GM12878 (cell line): ENCODE measurements at regions of chr22 and their contacts with region 1.

Region 1: GRCh38 chr22:25081409-25081824 is 118.2 kb upstream of the CRYBB3 start:
- DNase-seq: no peak
- ATAC-seq: peak; percentile 51
- H3K4me3 ChIP-seq: no peak overlapping the region
- H3K27ac ChIP-seq: no peak overlapping the region
- H3K4me1 ChIP-seq: peaks cover 34% of the 10 kb centered on the region
- H3K27me3 ChIP-seq: no peaks in the 10 kb centered on the region
- CTCF ChIP-seq: peak; percentile 60 to 77 (median 69)
- EP300 ChIP-seq: no peak
- POLR2A ChIP-seq: no peak
- RAD21 ChIP-seq: peak; percentile 44

Region 2: DNA sequence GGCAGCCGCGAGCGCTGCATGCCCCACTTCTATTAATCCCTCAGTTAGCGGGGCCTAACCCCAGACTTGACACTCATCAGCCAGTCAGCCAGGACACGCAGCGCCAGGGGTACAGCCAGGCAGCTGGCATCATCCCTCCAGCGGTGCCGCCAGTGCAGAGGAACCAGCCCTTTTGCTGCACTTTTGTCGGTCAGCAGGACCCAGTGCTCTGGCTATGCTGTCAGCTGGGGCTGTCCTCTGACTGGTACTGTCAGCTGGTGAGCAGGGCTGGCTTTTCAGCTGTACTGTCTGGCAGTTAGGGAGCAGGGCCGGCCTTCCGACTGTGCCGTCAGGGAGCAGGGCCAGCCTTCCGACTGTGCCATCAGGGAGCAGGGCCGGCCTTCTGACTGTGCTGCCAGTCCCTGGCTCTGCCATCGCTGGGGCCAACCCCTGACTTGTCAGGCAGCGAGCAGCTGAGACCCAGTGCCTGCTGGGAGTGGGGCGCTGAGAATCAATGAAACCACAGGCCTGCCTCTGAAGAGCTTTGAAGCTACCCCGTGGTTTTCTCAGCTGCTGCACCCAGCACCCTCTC is 13.5 kb before region 1 on chr22:
- CTCF ChIA-PET with region 1: interaction called, 48 read pairs
- POLR2A ChIA-PET with region 1: interaction called, 5 read pairs
- RAD21 ChIA-PET with region 1: interaction called, 9 read pairs
- SMC1A ChIA-PET with region 1: interaction called, 14 read pairs
- in situ Hi-C with region 1: no loop called
- intact Hi-C with region 1: no loop called
- DNase-seq: no peak
- ATAC-seq: peak; percentile 62
- H3K4me3 ChIP-seq: no peak overlapping the region
- H3K27ac ChIP-seq: no peak overlapping the region
- H3K4me1 ChIP-seq: peaks cover 25% of the 10 kb centered on the region
- H3K27me3 ChIP-seq: no peaks in the 10 kb centered on the region
- CTCF ChIP-seq: no peak
- EP300 ChIP-seq: no peak
- POLR2A ChIP-seq: no peak
- RAD21 ChIP-seq: no peak

Region 3: GRCh38 chr22:25134028-25134427 is 52.6 kb after region 1 on chr22:
- CTCF ChIA-PET with region 1: interaction called, 44 read pairs
- POLR2A ChIA-PET with region 1: interaction called, 3 read pairs
- RAD21 ChIA-PET with region 1: interaction called, 4 read pairs
- SMC1A ChIA-PET with region 1: interaction called, 12 read pairs
- in situ Hi-C with region 1: no loop called
- intact Hi-C with region 1: no loop called
- DNase-seq: no peak
- ATAC-seq: no peak
- H3K4me3 ChIP-seq: no peak overlapping the region
- H3K27ac ChIP-seq: no peak overlapping the region
- H3K4me1 ChIP-seq: no peaks in the 10 kb centered on the region
- H3K27me3 ChIP-seq: no peaks in the 10 kb centered on the region
- CTCF ChIP-seq: no peak
- EP300 ChIP-seq: no peak
- POLR2A ChIP-seq: no peak
- RAD21 ChIP-seq: no peak

Region 4: GRCh38 chr22:25202290-25202921 is 121.0 kb after region 1 on chr22:
- CTCF ChIA-PET with region 1: interaction called, 19 read pairs
- POLR2A ChIA-PET with region 1: no interaction called
- RAD21 ChIA-PET with region 1: interaction called, 7 read pairs
- SMC1A ChIA-PET with region 1: interaction called, 8 read pairs
- in situ Hi-C with region 1: no loop called
- intact Hi-C with region 1: no loop called
- DNase-seq: peak; percentile 8
- ATAC-seq: peak; percentile 92
- H3K4me3 ChIP-seq: no peak overlapping the region
- H3K27ac ChIP-seq: no peak overlapping the region
- H3K4me1 ChIP-seq: no peaks in the 10 kb centered on the region
- H3K27me3 ChIP-seq: no peaks in the 10 kb centered on the region; a peak in 1 of 4 replicates
- CTCF ChIP-seq: peak; percentile 87 to 93 (median 91)
- EP300 ChIP-seq: no peak
- POLR2A ChIP-seq: no peak
- RAD21 ChIP-seq: peak; percentile 76